HEK293 (cell line): ENCODE measurements at regions of chr3 and their contacts with region 1.

Region 1: DNA sequence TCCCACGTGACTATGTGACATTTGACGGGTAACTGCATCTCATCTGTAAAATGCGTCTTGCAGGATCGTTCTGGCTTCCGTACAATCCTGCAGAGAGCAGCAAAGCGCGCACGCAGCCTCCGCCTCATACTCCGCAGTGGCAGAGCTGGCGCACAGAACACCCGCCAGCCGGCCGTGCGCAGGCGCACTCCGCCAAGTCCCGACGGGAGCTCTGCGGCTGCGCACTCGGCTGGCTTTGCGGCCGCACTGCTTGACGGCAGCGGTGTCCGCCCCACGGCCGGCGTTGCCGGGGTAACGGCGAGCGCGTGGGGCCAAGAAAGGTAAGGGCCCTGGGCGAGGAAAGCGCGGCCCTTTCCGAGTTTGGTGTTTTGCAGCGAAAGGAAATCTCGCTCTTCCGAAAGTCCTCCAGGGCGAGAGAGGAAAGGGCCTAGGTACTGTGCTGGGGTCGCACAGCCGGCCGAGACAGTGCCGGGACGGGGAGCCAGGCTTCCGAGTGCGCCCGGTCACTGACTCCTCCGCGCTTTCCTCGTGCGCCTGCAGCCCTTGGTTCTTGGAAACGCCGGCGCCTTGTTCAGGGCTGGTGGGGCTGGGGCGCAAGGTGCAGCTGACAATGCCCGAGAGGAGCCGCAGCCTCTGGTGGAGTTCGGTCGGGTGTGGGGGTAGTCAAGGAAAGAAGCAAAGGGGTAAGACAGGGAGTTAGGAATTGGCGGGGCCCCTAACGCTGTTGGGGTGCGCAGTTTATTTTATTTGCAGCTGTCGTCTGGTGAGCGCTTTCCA is at the start of gene TSEN2:
- H3K4me3 ChIP-seq: peak within 1 kb of the TSS; percentile 79
- H3K27ac ChIP-seq: peak within 1 kb of the TSS; percentile 69
- H3K4me1 ChIP-seq: peaks cover 12% of the 10 kb centered on the region; the same call in 1 of the 2 replicates
- CTCF ChIP-seq: peak; percentile 49

Region 2: DNA sequence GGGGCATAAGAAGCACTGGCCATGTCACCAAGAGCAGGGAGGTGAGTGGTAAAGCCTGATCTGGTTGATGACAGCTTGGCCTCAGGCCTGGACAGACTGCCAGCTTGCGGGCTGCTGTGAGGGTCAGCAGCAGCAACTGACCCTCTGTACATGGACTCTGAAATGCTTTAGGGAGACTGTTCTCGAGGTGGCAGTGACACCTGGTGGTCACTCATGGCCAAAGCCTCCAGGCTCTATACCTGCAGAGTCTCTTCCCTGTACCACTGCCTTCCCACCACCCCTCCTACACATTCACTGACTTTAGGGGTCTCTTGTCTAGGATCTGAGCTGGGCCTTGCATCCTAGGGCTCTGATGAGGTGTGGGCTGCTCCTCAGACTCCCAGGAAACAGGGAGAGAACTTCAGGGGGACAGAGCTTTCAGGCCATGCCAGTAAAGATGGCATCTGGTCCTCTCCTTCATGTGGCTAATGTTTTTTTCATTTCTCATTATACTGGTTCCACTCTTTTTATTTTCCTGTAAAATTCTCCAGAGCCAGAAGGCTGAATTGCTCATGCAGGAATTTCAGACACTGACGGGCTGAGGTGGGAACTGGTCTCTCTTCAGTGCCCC is 308.4 kb before region 1 on chr3:
- CTCF ChIA-PET with region 1: interaction called, 17 read pairs
- POLR2A ChIA-PET with region 1: interaction called, 4 read pairs
- H3K4me3 ChIP-seq: no peak overlapping the region
- H3K27ac ChIP-seq: no peak overlapping the region
- H3K4me1 ChIP-seq: no peaks in the 10 kb centered on the region; the same call in 1 of the 2 replicates
- CTCF ChIP-seq: peak; percentile 74

Region 3: DNA sequence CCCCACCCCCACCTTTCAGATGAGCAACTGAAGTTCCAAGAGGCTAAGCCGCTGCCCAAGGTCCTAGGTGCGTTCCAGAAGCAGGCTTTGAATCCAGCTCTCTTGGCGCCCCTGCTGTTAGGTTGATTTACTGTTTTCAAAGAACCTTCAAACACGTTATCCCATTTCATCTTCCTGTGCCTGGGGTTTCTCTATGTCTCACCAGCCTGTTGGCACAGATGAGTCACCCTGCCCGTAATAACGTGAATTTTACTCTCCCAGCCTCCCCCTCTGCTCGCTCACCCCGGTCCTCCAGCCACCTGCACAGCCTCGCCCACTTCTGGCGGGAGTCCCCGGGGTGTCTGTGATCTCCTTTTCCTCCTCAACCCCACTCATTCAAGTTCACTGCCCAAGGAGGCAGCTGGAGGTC is 13.1 kb before region 1 on chr3:
- CTCF ChIA-PET with region 1: interaction called, 11 read pairs
- POLR2A ChIA-PET with region 1: no interaction called
- H3K4me3 ChIP-seq: no peak overlapping the region
- H3K27ac ChIP-seq: no peak overlapping the region
- H3K4me1 ChIP-seq: no peaks in the 10 kb centered on the region; the same call in 1 of the 2 replicates
- CTCF ChIP-seq: no peak

Region 4: DNA sequence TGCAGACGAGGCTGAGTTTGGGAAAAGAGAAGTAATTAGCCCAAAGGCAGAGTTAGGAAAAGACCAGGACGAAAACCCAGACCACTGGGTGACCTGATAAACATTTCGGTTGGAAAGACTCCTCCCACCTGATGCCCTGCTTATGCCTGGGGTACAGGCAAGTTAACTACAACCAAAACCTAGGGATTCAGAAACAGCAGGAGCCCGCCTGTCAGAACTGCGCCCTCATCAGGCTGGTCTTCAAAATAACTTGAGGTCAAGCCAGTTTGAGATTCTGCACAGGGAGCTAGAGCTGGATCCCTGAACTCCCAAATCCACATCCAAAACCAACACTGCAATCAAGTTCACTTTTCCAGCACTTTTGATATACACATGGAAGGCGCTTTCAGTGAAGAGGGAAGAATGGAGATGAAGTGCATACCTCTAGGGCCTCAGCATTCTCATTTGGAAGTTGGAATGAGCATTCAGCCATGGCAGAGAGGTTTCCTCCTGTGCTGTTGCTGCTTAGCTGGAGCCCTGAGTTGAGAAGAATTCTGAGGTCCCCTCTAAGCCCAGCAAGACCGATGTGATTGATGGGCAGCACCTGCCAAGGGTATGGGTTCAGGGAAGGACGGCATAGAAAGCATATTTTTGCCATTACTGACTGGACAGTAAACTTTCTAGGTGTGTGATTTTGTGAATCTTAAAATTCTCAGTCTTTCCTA is 11.5 kb after region 1 on chr3:
- CTCF ChIA-PET with region 1: interaction called, 15 read pairs
- POLR2A ChIA-PET with region 1: no interaction called
- H3K4me3 ChIP-seq: no peak overlapping the region
- H3K27ac ChIP-seq: no peak overlapping the region
- H3K4me1 ChIP-seq: no peaks in the 10 kb centered on the region
- CTCF ChIP-seq: no peak